Activated CD8-positive, alpha-beta T cell treated with anti-CD3 and anti-CD28 coated beads, Interleukin-2, amount 10 ng/mL, durations not matched to agents 7 days and 5 days (primary cell): ENCODE measurements at regions of chr14 and their contacts with region 1.

Region 1: DNA sequence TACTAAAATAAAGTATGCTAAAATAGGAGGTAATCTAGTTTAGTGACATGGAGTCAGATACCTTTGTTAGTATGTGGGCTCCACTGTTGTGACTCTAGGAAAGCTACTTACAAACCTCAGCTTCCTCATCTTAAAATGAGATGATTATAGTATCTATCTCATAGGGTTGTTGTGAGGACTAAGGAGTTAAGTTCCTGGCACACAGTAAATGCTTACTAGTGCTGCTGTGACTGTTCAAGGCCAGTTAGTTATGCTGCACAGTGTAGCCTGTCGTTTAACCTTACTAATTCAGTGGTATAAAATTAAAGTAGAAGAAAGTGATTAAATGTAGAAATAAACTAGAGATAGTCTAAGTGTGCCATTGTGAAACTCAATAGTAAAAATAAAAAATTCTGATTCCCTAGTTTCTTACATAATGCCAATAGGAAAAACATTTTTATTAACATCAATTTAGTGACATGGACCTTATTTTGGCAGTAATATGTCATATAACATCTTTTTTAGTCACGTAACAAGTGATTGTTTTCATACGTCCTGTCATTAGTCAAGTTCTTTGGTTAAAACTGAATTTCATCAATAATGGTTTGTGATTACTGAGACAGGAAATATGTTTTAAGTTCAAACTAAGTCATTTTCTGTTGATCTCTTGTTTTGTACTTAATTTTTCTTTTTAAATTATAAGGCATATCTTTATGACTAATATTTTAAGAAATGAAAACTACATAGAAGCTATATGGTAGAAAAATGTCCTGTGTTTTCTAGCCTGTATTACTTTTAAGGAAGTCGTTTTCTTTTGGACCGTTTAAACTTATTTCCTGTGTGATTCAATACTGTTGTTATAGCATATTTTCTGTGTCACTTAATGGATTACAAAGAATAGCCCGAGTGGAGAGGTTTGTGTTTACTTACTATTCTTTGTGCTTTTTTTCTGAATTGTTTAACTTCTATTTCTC is 74.0 kb downstream of the PCNX1 start:
- DNase-seq: no peak
- ATAC-seq: peak; percentile 44
- H3K4me3 Mint-ChIP-seq: peak overlapping the region; percentile 19
- H3K27ac Mint-ChIP-seq: peak overlapping the region; percentile 81
- H3K4me1 Mint-ChIP-seq: peaks cover 22% of the 10 kb centered on the region
- H3K27me3 Mint-ChIP-seq: no peaks in the 10 kb centered on the region

Region 2: GRCh38 chr14:70995676-70996075 is 14.4 kb after region 1 on chr14:
- CTCF ChIA-PET with region 1: interaction called, 17 read pairs
- POLR2A ChIA-PET with region 1: no interaction called
- DNase-seq: no peak
- ATAC-seq: no peak
- H3K4me3 Mint-ChIP-seq: no peak overlapping the region
- H3K27ac Mint-ChIP-seq: no peak overlapping the region
- H3K4me1 Mint-ChIP-seq: peaks cover 36% of the 10 kb centered on the region
- H3K27me3 Mint-ChIP-seq: no peaks in the 10 kb centered on the region